Heart right ventricle (tissue), 16 donors: ENCODE measurements at regions of chr13 and their contacts with region 1.

Region 1: DNA sequence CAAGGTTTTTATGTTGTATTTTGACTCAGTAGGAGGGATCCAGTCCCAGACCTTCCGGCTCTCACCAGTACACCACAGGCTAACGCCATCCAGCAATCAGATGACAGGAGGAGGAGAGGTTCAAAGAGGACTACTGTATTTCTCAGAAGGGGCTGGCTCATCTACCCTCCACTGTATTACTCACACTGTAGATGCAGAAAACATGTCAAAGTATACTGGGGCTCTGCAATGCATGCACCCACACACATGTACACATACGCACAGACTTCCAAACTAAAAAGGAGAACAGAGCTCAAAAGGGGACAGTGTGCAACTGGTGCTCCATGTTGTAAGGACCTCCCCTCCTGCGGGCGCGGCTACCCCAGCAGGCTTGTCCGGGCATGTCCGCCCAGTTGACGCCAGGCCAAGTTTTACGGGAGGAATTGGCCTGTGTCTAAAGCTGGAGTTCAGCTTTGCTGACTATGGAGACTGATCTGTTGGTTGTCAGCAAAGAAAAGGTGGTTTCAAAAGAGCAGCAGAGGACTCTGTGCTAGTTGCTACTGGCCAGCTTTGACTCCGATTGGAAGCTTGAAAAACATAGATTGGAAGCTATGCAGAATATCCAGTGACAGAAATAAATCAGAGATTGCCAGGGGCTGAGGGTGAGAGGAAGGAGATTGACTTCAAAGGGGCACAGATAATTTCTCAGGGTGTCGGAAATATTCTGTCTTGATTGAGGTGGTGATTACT is 314.2 kb downstream of the DLEU7 start:
- DNase-seq: peak; percentile 88 to 91
- ATAC-seq: peak; percentile 89 to 96 (median 94)
- H3K4me3 ChIP-seq: peak overlapping the region in 8 of 10 donors; percentile 5 to 34 (median 26)
- H3K27ac ChIP-seq: peak overlapping the region; percentile 26 to 93 (median 78)
- H3K4me1 ChIP-seq: peaks cover 0 to 51% (median 37%) of the 10 kb centered on the region in 9 donors
- H3K27me3 ChIP-seq: no peaks in the 10 kb centered on the region
- CTCF ChIP-seq: peak in 1 of 9 donors; percentile 11

Region 2: GRCh38 chr13:49976314-49977258 is 552.7 kb before region 1 on chr13:
- intact Hi-C with region 1: loop called in 8 of 10 experiments (anchors 5 to 10 kb)
- DNase-seq: peak; percentile 57 to 71
- ATAC-seq: peak; percentile 64 to 85 (median 80)
- H3K4me3 ChIP-seq: no peak overlapping the region
- H3K27ac ChIP-seq: no peak overlapping the region
- H3K4me1 ChIP-seq: peaks cover 0 to 5% (median 0%) of the 10 kb centered on the region in 9 donors
- H3K27me3 ChIP-seq: no peaks in the 10 kb centered on the region
- CTCF ChIP-seq: peak; percentile 71 to 94 (median 87)

Region 3: DNA sequence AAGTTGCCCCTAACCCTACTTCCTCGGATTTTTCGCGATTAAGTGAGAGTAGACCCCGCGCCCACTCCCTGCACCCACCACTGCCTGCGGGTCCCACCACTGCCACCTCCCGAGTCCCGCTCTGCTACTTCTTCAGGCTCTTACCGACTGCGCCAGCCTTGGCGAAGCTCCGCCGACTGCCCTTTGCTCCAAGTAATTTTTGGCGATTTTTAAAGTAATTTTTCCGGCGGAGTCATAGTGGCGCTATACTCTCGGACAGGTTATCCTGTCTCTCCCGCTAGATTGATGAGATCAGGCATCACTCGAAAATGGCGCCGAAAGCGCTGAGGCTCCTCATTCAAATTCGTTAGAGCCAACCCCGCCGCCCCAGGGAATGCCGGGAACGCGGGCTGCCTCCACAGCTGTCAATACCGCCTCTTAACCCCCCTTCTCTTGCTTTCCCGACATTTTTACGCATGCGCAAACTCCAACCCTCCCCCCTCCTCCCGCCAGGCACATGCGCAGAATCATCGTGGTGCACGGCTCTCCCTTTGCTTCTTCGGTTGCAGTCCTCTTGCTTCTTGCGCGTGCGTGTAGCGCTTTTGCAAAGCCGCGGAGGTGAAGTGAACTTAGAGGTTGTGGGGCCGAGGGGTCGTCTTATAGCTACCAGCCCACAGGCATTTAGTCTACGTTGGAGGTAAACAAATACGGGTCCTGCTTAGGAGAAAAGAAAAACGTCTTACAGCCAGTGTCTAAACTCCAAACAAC is 447.5 kb before region 1 on chr13:
- intact Hi-C with region 1: loop called in 8 of 10 experiments (anchors 2 to 10 kb)
- DNase-seq: peak; percentile 96 to 98
- ATAC-seq: peak; percentile 95 to 98 (median 97)
- H3K4me3 ChIP-seq: peak overlapping the region; percentile 42 to 82 (median 70)
- H3K27ac ChIP-seq: peak overlapping the region; percentile 30 to 91 (median 77)
- H3K4me1 ChIP-seq: peaks cover 0 to 82% (median 30%) of the 10 kb centered on the region in 9 donors
- H3K27me3 ChIP-seq: peaks cover 0 to 5% (median 0%) of the 10 kb centered on the region in 7 donors
- CTCF ChIP-seq: peak in 3 of 9 donors; percentile 18 to 30 (median 23)

Region 4: DNA sequence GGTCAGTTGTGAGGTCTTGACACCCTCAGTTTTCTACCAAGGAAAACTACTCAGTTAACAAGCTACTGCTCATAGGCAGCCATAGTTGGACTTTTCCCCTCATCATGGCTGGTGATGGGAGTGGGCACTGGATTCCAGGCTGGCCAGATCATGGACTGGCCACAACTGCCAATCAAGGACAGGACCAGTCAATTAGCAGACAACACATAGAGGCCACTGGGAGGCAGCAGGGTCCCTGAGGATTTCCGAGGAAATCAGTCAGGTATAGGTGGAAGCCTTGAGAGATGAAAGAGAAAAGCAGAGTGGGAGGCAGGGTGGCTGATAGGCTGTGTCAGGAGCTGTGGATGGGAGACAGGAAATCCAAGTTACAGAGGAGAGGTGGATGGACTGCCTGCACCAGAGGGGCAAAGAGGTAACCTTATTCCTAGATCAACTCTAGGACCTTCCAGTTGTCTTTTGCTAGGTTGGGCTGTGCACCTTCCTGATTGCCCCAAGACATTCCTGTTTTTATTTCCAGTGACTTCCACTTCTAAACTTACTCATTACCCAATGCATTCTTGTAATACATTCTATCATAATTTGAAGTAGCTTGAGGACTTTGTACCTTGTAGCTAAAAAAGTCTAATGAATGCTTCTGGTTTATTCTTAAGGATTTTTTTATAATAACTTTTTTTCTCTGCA is 152.3 kb before region 1 on chr13:
- intact Hi-C with region 1: loop called in 6 of 10 experiments (anchors 5 to 10 kb)
- DNase-seq: no peak
- ATAC-seq: peak in 4 of 8 donors; percentile 30 to 51 (median 36)
- H3K4me3 ChIP-seq: no peak overlapping the region
- H3K27ac ChIP-seq: no peak overlapping the region
- H3K4me1 ChIP-seq: no peaks in the 10 kb centered on the region
- H3K27me3 ChIP-seq: no peaks in the 10 kb centered on the region
- CTCF ChIP-seq: peak in 7 of 9 donors; percentile 10 to 50 (median 39)

Region 5: DNA sequence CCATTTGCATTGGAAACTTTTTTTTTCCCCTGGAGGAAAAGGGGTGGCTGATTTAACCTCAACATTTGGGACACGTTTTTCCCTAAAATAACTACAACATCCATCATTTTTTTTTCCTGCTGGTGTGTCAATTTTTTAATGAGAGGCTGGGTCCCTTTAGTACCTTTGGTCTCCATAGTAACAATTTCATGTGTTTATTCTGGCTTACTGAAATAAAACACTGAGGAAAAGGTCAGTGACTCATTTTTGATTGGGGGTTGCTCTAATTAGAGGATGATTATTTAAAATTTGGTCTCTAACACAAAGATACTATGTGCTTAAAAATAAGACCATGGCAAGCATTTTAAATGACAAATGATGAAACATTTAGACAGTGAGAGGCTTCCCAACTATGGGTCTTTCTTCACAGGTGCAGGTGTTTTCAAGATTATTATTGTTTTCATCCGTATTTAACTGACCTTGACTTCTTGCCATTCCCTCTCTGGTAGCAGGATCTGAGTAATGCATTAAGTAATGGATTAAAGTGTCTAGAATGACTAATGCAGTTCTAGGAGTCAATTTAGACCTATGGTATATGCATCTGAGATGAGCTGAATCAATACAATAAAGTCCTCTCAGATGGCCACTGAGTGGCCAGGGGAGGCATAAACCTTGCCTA is 107.7 kb before region 1 on chr13:
- intact Hi-C with region 1: loop called in 1 of 10 experiments (anchors 10 kb)
- DNase-seq: no peak
- ATAC-seq: peak in 3 of 8 donors; percentile 26 to 36 (median 28)
- H3K4me3 ChIP-seq: no peak overlapping the region
- H3K27ac ChIP-seq: peak overlapping the region in 9 of 10 donors; percentile 47 to 78 (median 69)
- H3K4me1 ChIP-seq: peaks cover 3 to 68% (median 58%) of the 10 kb centered on the region in 9 donors
- H3K27me3 ChIP-seq: no peaks in the 10 kb centered on the region
- CTCF ChIP-seq: no peak

Region 6: GRCh38 chr13:50437252-50437651 is 92.1 kb before region 1 on chr13:
- intact Hi-C with region 1: no loop called
- DNase-seq: no peak
- ATAC-seq: no peak
- H3K4me3 ChIP-seq: no peak overlapping the region
- H3K27ac ChIP-seq: no peak overlapping the region
- H3K4me1 ChIP-seq: no peaks in the 10 kb centered on the region
- H3K27me3 ChIP-seq: no peaks in the 10 kb centered on the region
- CTCF ChIP-seq: no peak

Region 7: GRCh38 chr13:50911937-50912795 is 382.8 kb after region 1 on chr13:
- intact Hi-C with region 1: loop called in 4 of 10 experiments (anchors 5 to 10 kb)
- DNase-seq: peak; percentile 87 to 89
- ATAC-seq: peak in 7 of 8 donors; percentile 14 to 69 (median 49)
- H3K4me3 ChIP-seq: peak overlapping the region in 1 of 10 donors; percentile 86
- H3K27ac ChIP-seq: peak overlapping the region in 6 of 10 donors; percentile 20 to 96 (median 69)
- H3K4me1 ChIP-seq: peaks cover 8 to 75% (median 56%) of the 10 kb centered on the region in 9 donors
- H3K27me3 ChIP-seq: no peaks in the 10 kb centered on the region
- CTCF ChIP-seq: peak; percentile 65 to 91 (median 87)